ENCODE measurements at regions of chr12 and their contacts with region 1.

Region 1: GRCh38 chr12:2395354-2395977 is 342.7 kb downstream of the CACNA1C start:
- DNase-seq: peak; percentile 38
- H3K4me3 ChIP-seq: no peak overlapping the region
- H3K27ac ChIP-seq: no peak overlapping the region
- H3K4me1 ChIP-seq: no peaks in the 10 kb centered on the region
- H3K27me3 ChIP-seq: no peaks in the 10 kb centered on the region
- CTCF ChIP-seq: peak; percentile 86 to 87
- POLR2A ChIP-seq: no peak

Region 2: DNA sequence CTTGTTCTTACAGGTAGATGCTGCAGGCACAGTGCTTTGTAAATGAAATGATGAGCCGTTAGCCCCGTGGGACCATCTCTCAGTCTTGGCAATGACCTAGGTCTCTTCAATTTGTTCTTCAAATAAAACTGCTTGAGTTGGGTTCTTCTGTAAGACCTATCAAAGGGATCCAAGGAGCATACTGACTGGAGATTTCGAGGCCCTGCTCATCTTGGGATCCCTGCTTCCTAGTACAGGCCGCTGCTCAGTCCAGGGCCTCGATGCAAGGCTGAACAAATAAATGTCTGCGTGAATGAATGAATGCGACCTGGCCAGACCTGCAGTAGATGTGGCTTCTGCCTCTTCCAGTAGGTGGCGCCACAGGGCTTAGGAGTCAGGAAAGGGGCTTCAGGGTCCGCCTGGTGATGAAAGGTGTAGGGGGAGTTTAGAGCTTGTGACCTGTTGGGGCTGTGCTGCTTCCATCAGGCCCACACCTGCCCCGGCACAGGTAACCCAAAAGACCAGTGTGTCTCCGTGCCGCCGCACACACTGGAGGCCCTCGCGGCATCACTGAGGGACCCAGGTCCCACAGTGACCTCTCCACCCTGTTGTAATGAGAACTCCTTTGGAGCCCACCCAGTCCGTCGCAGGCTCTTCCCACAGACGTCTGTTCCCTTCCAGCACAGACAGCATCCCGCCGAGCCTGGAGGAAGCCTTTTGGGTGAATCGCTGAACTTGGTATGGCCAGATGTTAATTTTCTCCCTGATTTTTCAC is 338.2 kb before region 1 on chr12:
- CTCF ChIA-PET with region 1: no interaction called
- POLR2A ChIA-PET with region 1: no interaction called
- dilution Hi-C with region 1: no loop called
- intact Hi-C with region 1: loop called (anchors 10 kb)
- DNase-seq: peak; percentile 34
- H3K4me3 ChIP-seq: no peak overlapping the region
- H3K27ac ChIP-seq: no peak overlapping the region
- H3K4me1 ChIP-seq: peaks cover 3% of the 10 kb centered on the region
- H3K27me3 ChIP-seq: peaks cover 36 to 43% of the 10 kb centered on the region in 2 experiments
- CTCF ChIP-seq: peak; percentile 54 to 70
- POLR2A ChIP-seq: no peak

Region 3: GRCh38 chr12:2336409-2336829 is 59.0 kb before region 1 on chr12:
- CTCF ChIA-PET with region 1: interaction called, 3 read pairs
- POLR2A ChIA-PET with region 1: no interaction called
- dilution Hi-C with region 1: no loop called
- intact Hi-C with region 1: loop called (anchors 5 kb)
- DNase-seq: peak; percentile 86
- H3K4me3 ChIP-seq: no peak overlapping the region
- H3K27ac ChIP-seq: peak overlapping the region; percentile 87
- H3K4me1 ChIP-seq: peaks cover 41% of the 10 kb centered on the region
- H3K27me3 ChIP-seq: no peaks in the 10 kb centered on the region
- CTCF ChIP-seq: no peak
- POLR2A ChIP-seq: peak; percentile 28

Region 4: DNA sequence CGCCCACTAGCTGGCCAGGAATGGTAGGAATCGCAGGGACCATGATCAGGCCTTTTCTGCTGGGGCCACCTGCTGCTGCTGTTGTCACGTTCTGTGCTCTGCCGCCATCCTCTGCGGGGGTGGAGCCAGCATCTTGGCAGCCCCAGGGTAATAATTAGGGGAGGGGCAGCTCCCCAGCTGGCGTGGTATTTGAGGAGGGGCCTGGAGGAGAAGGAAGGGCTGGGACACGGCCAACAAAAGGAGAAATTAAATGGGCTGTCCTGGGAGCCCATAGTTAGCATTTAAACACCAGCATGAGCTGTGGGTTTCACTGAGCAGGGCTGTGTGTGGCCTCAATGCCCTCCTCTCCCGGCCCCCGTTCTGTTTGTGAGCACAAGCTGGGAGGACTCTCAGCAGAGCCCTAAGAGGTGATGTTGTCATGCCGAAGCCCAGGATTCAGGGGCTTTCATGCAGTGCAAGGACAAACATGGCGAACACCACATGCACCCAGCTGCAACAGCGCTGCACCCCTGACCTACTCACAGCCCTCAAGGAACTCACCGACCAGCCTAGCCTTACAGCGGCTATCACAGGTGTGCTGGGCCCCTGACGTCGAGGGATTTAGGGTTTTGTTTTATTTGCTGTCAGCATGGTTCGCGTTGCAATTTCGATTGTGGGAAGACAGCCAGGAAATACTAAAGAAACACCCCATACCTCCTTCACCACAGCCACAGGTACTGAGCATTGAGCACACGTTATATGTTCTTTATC is 18.4 kb before region 1 on chr12:
- CTCF ChIA-PET with region 1: interaction called, 11 read pairs
- POLR2A ChIA-PET with region 1: no interaction called
- dilution Hi-C with region 1: no loop called
- intact Hi-C with region 1: no loop called
- DNase-seq: no peak
- H3K4me3 ChIP-seq: no peak overlapping the region
- H3K27ac ChIP-seq: no peak overlapping the region
- H3K4me1 ChIP-seq: no peaks in the 10 kb centered on the region
- H3K27me3 ChIP-seq: no peaks in the 10 kb centered on the region
- CTCF ChIP-seq: no peak
- POLR2A ChIP-seq: no peak